ENCODE measurements at regions of chr1 and their contacts with region 1.

Region 1: DNA sequence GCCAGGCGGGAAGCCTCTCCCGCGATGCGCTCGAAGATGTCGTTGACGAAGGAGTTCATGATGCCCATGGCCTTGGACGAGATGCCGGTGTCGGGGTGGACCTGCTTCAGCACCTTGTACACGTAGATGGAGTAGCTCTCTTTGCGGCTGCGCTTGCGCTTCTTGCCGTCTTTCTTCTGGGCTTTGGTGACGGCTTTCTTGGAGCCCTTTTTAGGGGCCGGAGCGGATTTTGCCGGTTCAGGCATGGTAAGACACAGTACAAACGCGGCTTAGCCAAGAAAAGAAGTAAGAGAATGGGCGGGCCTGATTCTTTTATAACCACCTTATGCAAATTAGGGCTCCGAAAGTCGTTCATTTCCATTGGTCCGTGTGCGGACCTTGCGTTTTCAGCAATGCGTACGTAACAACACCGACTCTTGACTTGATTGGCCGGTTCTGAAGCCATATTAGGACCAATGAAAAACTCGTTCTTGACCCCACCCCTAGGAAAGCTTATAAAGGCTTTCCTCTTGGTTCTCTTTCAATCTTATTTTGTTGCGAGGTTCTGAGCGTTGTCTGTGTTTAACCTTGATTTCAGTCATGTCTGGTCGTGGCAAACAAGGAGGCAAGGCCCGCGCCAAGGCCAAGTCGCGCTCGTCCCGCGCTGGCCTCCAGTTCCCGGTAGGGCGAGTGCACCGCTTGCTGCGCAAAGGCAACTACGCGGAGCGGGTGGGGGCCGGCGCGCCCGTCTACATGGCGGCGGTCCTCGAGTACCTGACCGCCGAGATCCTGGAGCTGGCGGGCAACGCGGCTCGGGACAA is 12.8 kb upstream of the BOLA1 start:
- DNase-seq: peak; percentile 88
- H3K4me3 ChIP-seq: peak overlapping the region; percentile 73 to 88
- H3K27ac ChIP-seq: peak overlapping the region; percentile 98 to 100
- H3K4me1 ChIP-seq: peaks cover 8 to 19% of the 10 kb centered on the region in 2 experiments; a peak in 3 of 4 replicates
- H3K27me3 ChIP-seq: no peaks in the 10 kb centered on the region
- CTCF ChIP-seq: no peak
- EP300 ChIP-seq: peak in 1 of 2 experiments; percentile 30; a peak in 1 of 4 replicates
- RAD21 ChIP-seq: no peak

Region 2: DNA sequence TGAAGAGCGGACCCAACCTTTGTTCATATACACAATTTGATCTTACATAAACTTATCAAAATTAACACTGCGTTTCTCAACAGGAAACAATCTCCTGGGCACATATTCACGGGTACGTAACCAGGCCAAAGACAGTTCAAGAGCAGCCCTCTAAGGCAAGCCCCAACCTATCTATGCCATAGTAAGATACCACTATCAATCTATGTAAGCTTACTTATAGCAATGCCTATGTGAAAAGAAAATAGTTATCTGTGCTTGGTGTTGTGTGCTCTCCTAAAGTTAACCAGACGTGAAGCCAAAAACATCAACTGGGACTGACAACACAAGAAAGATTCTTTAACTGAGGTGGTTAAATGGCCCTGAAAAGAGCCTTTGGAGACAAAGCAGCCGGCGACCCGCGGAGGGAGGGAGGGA is 36.6 kb before region 1 on chr1:
- CTCF ChIA-PET with region 1: interaction called, 5 read pairs
- POLR2A ChIA-PET with region 1: interaction called, 13 read pairs
- DNase-seq: no peak
- H3K4me3 ChIP-seq: peak overlapping the region; percentile 65 to 69
- H3K27ac ChIP-seq: peak overlapping the region; percentile 72 to 90
- H3K4me1 ChIP-seq: peaks cover 13 to 35% of the 10 kb centered on the region in 2 experiments; a peak in 3 of 4 replicates
- H3K27me3 ChIP-seq: no peaks in the 10 kb centered on the region
- CTCF ChIP-seq: no peak
- EP300 ChIP-seq: no peak
- RAD21 ChIP-seq: no peak

Region 3: DNA sequence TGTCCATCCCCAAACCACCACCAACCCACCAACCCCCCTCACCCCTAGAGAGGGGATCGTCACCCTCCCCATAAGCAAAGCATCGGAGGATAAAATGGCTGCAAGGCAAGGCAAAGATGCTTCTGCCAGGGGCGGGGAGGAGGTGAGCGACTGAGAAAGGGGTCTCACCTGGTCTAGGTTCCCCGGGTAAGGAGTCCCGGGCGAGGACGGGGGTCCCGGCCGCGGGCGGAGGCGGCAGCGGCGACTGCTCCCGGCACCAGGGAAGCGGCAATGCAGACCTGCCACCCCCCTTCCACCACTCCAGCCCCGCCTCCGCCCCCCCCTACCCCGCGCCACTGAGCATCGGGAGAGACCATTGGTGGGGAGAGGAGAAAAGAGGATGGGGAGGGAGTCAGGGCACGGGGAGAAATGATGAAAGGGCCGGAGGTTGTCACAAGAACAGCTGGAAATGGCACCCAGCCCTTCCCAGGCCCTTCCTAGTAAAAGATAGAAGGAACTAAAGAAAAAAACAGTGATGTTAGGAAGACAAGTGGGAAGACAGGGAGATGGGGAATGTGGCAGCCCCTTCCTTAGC is 31.1 kb after region 1 on chr1 and contains the start of gene SV2A:
- CTCF ChIA-PET with region 1: interaction called, 4 read pairs
- POLR2A ChIA-PET with region 1: interaction called, 10 read pairs
- DNase-seq: peak; percentile 95
- H3K4me3 ChIP-seq: peak within 1 kb of the TSS; percentile 80 to 83
- H3K27ac ChIP-seq: peak within 1 kb of the TSS in 1 of 2 experiments; percentile 79; a peak in 2 of 4 replicates
- H3K4me1 ChIP-seq: peaks cover 11 to 26% of the 10 kb centered on the region in 2 experiments; a peak in 2 of 4 replicates
- H3K27me3 ChIP-seq: no peaks in the 10 kb centered on the region
- CTCF ChIP-seq: no peak
- EP300 ChIP-seq: no peak
- RAD21 ChIP-seq: no peak
- polyA plus RNA-seq, gene SV2A: 22.7 and 27.6 TPM in 2 replicates

Region 4: DNA sequence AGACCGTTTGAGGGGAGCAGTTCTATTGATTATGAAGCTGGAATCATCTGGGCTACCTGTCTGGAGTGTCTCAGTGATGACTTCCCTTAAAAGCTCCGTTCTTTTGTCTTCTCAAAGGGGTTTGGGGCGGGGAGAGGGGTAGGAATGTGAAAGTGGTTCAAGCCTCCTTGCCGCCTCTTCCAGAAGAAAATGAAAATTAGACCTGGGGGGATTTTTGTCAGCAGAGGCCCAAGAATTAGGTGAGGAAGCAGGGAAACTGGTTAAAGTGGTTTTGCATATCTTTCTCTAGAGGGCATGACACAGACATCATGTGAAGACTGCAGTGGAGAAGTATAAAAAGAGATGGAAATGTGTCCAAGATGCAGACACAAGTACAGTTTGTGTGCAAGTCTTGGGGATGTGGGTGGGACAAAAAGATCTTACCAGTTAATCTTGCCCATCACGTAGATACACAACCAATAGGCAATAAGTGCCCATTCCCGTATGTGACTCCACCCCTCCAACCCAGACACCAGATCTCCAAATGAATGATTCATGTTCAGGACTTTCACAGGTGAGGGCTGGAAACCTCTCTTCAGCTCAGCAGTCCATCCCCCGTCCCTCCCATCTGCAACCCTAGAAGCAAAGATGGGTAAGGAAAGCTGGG is 50.6 kb after region 1 on chr1:
- CTCF ChIA-PET with region 1: interaction called, 33 read pairs
- POLR2A ChIA-PET with region 1: interaction called, 30 read pairs
- DNase-seq: no peak
- H3K4me3 ChIP-seq: peak overlapping the region; percentile 51; a peak in 2 of 4 replicates
- H3K27ac ChIP-seq: peak overlapping the region; percentile 73 to 83
- H3K4me1 ChIP-seq: peaks cover 22 to 29% of the 10 kb centered on the region in 2 experiments
- H3K27me3 ChIP-seq: no peaks in the 10 kb centered on the region
- CTCF ChIP-seq: peak; percentile 19; the same call in 1 of the 2 replicates
- EP300 ChIP-seq: no peak
- RAD21 ChIP-seq: no peak

Region 5: DNA sequence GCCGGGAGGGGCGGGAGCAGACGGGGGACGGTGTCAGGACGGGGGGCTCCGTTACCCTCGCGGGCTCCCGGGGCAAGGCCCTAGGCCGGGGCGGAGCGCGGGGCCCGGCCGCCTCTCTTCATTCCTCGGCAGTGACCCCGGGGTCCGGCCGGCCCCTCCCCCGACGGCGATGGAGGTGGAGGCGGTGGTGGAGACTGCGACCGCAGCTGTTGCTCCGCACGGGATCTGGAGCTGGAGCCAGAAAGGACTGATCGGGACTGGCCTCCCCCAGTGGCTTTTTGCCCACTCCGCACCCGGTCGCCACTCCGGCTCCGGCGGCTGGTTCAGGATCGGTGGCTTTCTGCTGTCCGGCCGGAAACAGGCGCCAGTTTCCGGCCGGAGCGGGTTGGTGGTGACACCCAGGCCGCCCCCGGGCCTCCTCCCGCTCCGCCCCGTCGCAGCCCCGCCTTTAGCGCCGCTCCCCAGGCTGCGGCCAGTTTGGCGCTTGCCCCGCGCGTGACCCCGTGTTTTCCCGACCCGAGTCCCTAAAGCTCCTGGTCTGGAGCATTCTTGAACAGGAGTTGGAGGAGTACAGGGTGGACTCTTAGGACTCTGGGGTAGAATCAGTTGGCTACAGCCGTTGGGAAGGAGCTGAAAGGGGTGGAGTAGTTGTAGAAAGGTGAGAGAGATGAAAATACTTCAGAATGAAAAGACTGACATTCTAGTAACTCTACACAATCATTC is 124.0 kb after region 1 on chr1 and contains the start of gene OTUD7B:
- CTCF ChIA-PET with region 1: interaction called, 4 read pairs
- POLR2A ChIA-PET with region 1: interaction called, 10 read pairs
- DNase-seq: peak; percentile 94
- H3K4me3 ChIP-seq: peak within 1 kb of the TSS; percentile 78 to 100
- H3K27ac ChIP-seq: peak within 1 kb of the TSS; percentile 93 to 98
- H3K4me1 ChIP-seq: peaks cover 19 to 25% of the 10 kb centered on the region in 2 experiments; a peak in 3 of 4 replicates
- H3K27me3 ChIP-seq: no peaks in the 10 kb centered on the region
- CTCF ChIP-seq: no peak; the same call in 1 of the 2 replicates
- EP300 ChIP-seq: peak; percentile 29 to 74; a peak in 2 of 4 replicates
- RAD21 ChIP-seq: 0 out of 2 replicates have a peak, but pooled peaks have one; percentile 8
- polyA plus RNA-seq, gene OTUD7B: 4.2 and 5.8 TPM in 2 replicates

Region 6: DNA sequence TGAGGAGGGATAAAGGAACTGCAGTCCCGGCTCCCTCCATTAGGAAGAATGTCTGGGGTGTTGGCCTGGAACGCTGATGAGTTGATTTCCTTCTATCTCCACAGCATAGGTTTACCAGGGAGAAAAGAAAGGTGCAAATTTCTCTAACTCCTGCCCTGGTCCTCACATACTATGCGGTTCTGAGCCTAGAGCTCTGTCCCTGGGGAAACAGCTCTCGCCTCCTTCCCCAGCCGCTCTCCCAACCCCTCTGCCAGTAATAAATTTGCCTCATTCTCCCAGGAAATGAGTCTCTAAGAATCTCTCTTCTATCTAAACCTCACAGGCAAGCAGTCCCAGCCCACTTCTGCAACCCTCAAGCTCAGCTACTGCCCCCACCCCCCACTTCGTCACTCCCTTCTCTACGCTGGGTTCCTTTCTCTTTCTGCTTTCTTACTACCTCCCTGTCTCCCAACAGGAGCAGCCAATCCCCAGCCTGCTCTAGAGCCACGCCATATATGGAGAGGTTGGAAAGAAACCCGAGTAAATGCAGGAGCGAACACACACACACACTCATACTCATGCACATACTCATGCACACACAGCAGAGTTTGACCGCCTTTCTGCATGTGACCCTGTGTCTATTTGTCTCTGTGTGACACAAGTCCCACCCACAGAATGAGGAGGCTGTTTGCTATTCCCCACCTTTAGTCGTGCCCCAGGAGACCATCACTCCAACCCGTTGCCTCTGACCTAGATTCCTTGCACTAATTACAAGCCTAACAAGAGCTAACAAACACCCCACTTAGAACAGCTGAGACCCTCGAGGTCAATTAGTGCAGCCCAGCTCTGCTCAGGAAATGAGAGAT is 276.5 kb after region 1 on chr1:
- CTCF ChIA-PET with region 1: interaction called, 19 read pairs
- POLR2A ChIA-PET with region 1: interaction called, 10 read pairs
- DNase-seq: peak; percentile 71
- H3K4me3 ChIP-seq: peak overlapping the region in 1 of 2 experiments; percentile 18; a peak in 1 of 4 replicates
- H3K27ac ChIP-seq: peak overlapping the region; percentile 94 to 95
- H3K4me1 ChIP-seq: peaks cover 31 to 43% of the 10 kb centered on the region in 2 experiments
- H3K27me3 ChIP-seq: no peaks in the 10 kb centered on the region
- CTCF ChIP-seq: no peak; the same call in 1 of the 2 replicates
- EP300 ChIP-seq: peak in 1 of 2 experiments; percentile 60; a peak in 1 of 4 replicates
- RAD21 ChIP-seq: no peak

Region 7: GRCh38 chr1:150186789-150187559 is 300.4 kb after region 1 on chr1:
- CTCF ChIA-PET with region 1: interaction called, 15 read pairs
- POLR2A ChIA-PET with region 1: interaction called, 12 read pairs
- DNase-seq: peak; percentile 66
- H3K4me3 ChIP-seq: no peak overlapping the region
- H3K27ac ChIP-seq: peak overlapping the region in 1 of 2 experiments; percentile 42; a peak in 2 of 4 replicates
- H3K4me1 ChIP-seq: peaks cover 0 to 2% of the 10 kb centered on the region in 2 experiments; a peak in 1 of 4 replicates
- H3K27me3 ChIP-seq: no peaks in the 10 kb centered on the region
- CTCF ChIP-seq: peak; percentile 76
- EP300 ChIP-seq: no peak
- RAD21 ChIP-seq: peak; percentile 76

Measured in SK-N-SH (cell line).